CD8-positive, alpha-beta T cell (primary cell): ENCODE measurements at regions of chr11 and their contacts with region 1.

Region 1: GRCh38 chr11:114036156-114036811 is 23.2 kb upstream of the ZBTB16 start:
- DNase-seq: peak; percentile 7 to 80 (median 56)
- ATAC-seq: peak; percentile 54
- H3K4me3 ChIP-seq: no peak overlapping the region
- H3K4me3 Mint-ChIP-seq: no peak overlapping the region
- H3K27ac ChIP-seq: no peak overlapping the region
- H3K27ac Mint-ChIP-seq: no peak overlapping the region
- H3K4me1 ChIP-seq: peaks cover 9% of the 10 kb centered on the region
- H3K4me1 Mint-ChIP-seq: peaks cover 3% of the 10 kb centered on the region
- H3K27me3 ChIP-seq: peaks cover 0 to 3% of the 10 kb centered on the region in 2 experiments
- H3K27me3 Mint-ChIP-seq: peaks cover 7% of the 10 kb centered on the region
- CTCF ChIP-seq: peak; percentile 59

Region 2: GRCh38 chr11:113896156-113896879 is 140.0 kb before region 1 on chr11:
- CTCF ChIA-PET with region 1: interaction called, 14 read pairs
- POLR2A ChIA-PET with region 1: no interaction called
- intact Hi-C with region 1: loop called in 1 of 2 experiments (anchors 1 kb)
- DNase-seq: peak in 8 of 9 experiments; percentile 18 to 62 (median 35)
- ATAC-seq: peak; percentile 42
- H3K4me3 ChIP-seq: no peak overlapping the region
- H3K4me3 Mint-ChIP-seq: no peak overlapping the region
- H3K27ac ChIP-seq: no peak overlapping the region
- H3K27ac Mint-ChIP-seq: no peak overlapping the region
- H3K4me1 ChIP-seq: no peaks in the 10 kb centered on the region
- H3K4me1 Mint-ChIP-seq: peaks cover 2% of the 10 kb centered on the region
- H3K27me3 ChIP-seq: no peaks in the 10 kb centered on the region
- H3K27me3 Mint-ChIP-seq: no peaks in the 10 kb centered on the region
- CTCF ChIP-seq: peak; percentile 70

Region 3: DNA sequence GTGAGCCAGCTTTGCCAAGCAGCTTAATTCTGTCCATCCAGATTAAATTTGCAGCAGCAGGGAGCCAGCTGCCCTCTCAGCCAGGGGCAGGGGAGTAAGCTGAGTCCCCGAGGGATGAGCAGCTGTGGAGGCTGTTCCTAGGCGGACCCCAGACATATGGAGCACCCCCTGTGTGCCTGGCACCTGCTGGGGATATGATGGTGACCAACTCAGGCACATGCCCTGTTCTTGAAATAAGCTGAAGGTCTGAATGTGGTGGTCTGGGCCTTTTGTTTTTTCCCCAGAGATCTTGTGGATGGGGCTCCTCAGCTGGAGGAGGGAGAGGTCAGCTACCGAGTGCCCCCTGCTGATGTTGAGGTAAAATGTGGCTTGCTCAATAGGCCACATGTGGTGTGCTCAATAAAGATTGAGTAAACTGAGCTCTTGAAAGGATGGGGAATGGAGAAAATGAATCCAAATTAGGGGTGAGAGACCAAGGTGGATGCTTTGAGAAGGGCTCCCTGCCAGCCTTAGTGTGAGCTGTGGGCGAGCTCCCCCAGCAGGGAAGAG is 156.6 kb after region 1 on chr11:
- CTCF ChIA-PET with region 1: interaction called, 42 read pairs
- POLR2A ChIA-PET with region 1: no interaction called
- intact Hi-C with region 1: loop called (anchors 1 kb)
- DNase-seq: peak in 2 of 9 experiments; percentile 24 to 31
- ATAC-seq: no peak
- H3K4me3 ChIP-seq: no peak overlapping the region
- H3K4me3 Mint-ChIP-seq: no peak overlapping the region
- H3K27ac ChIP-seq: no peak overlapping the region
- H3K27ac Mint-ChIP-seq: no peak overlapping the region
- H3K4me1 ChIP-seq: no peaks in the 10 kb centered on the region
- H3K4me1 Mint-ChIP-seq: peaks cover 44% of the 10 kb centered on the region
- H3K27me3 ChIP-seq: no peaks in the 10 kb centered on the region
- H3K27me3 Mint-ChIP-seq: no peaks in the 10 kb centered on the region
- CTCF ChIP-seq: no peak

Region 4: DNA sequence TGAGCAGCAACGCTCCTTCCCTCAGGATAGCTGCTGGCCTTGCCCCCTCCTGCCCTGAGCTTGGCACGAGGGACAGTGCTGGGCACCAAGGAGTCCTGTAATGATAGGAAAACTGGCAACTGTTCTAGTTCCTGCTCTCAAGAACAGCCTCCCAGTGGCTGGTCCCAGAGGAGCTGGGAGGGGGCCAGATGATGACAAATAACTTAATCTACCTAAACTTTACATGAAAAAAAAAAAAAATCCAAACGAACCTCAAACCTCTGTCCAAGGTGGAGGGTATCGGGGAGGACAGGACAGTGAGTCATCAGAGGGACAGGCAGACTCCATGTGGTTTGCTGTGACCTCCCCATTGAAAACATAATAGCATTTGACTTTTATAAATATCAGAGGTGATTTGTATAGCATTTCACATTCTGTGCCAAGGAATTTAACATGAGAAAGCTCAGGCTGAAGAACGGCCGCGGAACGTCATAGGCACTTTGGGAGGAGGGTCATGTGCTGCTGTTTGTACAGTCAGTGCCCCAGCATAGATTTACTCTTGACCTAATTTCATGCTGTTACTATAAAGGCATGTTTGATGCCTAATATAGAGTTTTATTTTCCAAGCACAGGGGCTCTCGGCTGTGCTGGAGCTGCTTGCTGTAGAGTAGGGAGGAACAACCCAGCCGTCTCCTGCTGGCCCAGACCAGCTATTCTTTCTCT is 161.7 kb after region 1 on chr11:
- CTCF ChIA-PET with region 1: interaction called, 42 read pairs
- POLR2A ChIA-PET with region 1: no interaction called
- intact Hi-C with region 1: loop called (anchors 1 kb)
- DNase-seq: no peak
- ATAC-seq: no peak
- H3K4me3 ChIP-seq: no peak overlapping the region
- H3K4me3 Mint-ChIP-seq: no peak overlapping the region
- H3K27ac ChIP-seq: no peak overlapping the region
- H3K27ac Mint-ChIP-seq: peak overlapping the region; percentile 22
- H3K4me1 ChIP-seq: no peaks in the 10 kb centered on the region
- H3K4me1 Mint-ChIP-seq: peaks cover 24% of the 10 kb centered on the region
- H3K27me3 ChIP-seq: no peaks in the 10 kb centered on the region
- H3K27me3 Mint-ChIP-seq: no peaks in the 10 kb centered on the region
- CTCF ChIP-seq: no peak